Head of caudate nucleus (tissue), 42 donors: ENCODE measurements at regions of chr11 and their contacts with region 1.

Region 1: DNA sequence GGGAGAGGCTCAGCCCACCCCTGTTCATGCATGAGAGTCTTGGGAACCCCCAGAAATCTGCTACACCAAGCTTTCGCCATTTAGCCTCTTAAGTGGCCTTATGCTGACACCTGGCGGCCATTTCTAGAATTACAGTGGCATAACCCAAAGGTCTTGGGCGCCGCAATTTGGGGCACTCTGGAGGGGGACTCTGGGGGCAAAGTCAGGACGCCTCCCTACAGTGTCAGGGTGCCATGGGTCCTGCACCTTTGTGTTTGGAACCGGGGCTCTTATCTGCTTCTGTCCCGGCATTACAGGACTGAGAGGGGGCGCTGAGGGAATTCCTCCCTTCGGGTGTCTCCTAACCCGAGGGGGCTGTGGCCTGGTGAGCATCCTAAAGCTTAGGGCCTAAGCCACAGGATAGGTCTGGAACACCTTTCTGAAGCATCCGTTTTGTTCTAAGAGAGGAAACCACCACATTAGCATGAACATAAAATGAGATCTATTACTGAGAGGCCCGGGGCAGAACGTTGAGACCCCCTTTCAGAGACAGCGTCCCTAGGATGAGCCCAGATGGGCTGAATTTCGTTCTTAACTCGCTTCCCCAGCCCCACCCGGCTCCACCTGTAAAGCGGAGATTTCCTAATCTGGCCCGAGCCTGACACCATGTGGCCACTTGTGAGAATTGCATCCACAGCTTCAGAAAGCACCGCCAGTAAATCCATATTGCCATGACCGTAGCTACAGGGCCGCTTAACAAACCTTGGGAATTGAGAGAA is 9.3 kb downstream of the INS start:
- DNase-seq: peak; percentile 70 to 92 (median 84)

Region 2: DNA sequence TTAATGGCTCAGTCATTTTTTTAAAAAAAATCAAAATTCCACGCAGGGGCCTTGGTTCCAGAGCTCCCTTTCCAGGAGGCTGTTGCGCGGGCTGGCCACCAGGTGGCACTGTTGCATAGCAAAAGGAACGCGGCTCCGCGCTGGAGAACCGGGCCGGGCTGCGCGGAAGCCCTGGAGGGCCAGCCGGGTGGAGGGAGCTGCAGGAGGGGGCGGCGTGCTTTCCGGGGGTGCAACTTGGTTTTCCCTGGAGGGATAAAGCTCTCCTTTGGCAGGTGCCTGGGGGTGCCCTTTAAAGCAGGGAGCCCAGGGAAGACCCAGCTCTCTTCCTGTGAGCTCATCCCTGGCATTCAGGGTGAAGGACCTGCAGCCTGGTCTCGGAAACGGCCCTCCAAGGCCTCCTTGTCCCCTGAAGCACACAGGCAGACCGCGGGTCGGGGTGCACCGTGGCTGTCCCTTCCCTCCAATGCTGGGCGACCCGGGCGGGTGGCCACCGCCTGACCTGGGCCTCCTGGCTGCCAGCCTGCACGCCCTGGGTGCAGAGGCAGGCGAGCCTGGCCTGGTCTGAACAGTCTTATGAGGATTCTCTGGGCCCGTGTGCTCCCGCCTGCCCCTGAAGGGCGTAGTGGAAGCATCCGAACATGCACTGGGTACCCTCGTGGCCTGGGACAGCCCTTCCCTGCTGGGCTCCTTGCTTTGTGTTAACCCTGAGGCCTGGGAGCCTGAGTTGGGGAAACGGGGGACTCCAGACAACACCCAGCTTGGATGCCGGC is 498.7 kb before region 1 on chr11:
- intact Hi-C with region 1: loop called (anchors 5 kb)
- DNase-seq: peak; percentile 71 to 94 (median 87)

Region 3: DNA sequence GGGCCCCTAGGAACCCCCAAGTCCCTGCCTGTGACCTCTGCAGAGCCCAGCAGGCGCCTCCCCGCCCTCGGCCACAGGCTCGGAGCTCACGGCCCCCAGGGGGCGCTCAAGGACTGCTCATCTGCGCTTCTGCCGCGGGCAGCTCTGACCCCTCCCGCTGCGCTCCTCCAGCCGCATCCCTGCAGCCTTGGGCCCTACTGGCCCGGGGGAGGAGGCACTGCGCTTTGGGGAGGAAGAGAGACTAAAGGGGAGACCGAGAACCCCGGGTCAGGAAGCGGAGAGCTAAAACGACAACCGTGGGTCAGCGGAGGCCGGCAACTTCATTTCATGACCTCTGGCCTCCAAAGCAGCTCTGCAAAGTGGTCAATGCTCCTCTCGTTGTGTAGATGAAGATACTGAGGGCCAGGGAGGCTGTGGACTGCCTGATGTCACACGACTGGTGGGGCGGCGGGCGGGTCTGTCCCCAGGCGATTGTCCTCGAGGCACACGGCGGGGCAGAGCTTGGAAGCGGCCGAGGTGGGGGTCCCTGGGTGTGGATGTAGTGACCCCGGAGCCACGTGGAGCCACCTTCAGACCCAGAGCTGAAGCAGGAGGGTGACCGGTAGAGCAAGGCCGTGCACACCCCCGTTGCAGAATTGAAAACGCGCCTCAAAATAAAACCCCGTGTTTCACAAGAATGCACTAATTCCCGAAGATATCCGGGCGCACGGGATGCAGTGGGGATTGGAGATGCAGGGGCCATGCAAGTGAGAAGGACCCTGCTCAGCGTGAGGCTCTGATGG is 457.4 kb before region 1 on chr11:
- intact Hi-C with region 1: loop called (anchors 5 kb)
- DNase-seq: peak; percentile 73 to 97 (median 92)

Region 4: DNA sequence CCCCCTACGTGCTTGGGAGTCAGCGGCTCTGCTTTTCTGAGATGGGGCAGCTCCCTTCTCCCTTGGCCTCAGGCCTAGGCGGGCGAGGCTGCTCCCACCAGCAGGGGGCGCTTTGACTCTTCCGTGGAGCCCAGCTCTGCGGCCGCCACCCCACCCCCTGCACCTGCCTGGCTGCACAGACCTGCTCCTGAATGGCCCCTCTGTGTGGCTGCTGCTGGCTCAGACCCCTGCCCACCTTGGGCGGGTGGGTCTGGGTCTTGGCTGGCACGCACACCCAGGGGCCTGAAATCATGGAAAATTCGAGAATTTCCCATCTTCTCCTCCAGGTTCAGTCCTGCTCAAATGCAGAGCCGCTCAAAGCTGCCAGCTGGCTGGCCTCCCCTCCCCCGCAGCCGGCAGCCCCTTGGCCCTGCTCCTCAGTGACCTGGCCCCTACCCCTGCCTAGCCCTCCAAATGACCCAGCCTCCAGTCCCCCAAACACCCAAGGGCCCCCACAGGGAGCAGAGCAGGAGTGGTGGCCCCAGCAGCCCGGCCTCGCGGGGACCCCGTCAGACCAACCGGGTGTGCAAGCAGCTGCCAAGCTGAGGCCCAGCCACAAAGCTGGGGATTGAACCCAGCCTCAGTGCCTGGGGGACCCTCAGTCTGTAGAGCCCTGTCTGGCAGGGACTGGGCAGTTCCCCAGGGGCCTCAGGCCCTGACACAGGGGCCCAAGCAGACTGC is 269.0 kb before region 1 on chr11:
- intact Hi-C with region 1: loop called (anchors 10 kb)
- DNase-seq: peak; percentile 28 to 88 (median 78)

Region 5: DNA sequence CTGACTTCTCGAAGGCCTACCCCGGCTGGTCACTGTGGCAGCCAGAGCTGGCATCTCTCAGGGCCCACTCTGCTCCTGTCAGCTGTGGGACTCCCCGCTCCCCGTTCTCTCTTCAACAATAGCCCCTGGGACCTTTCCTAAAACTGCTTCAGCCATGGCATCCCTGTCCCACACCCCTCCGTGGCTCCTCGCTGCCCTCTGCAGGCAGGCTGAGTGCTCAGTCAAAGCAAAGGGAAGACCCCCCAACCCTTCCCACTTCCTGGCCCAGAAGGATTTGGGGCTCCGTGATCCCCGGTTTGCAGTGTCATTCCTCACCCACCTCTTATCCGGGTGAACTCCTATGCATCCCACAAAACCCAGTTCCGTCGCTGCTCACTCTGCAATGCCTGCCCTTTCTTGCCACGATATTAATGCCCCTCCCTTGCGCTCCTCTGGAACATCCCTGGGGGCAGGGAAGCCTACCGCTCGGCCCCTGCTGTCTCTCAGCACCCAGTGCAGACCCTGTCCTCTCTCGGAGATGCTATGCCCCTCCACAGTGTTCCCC is 21.5 kb after region 1 on chr11:
- intact Hi-C with region 1: no loop called
- DNase-seq: no peak

Region 6: DNA sequence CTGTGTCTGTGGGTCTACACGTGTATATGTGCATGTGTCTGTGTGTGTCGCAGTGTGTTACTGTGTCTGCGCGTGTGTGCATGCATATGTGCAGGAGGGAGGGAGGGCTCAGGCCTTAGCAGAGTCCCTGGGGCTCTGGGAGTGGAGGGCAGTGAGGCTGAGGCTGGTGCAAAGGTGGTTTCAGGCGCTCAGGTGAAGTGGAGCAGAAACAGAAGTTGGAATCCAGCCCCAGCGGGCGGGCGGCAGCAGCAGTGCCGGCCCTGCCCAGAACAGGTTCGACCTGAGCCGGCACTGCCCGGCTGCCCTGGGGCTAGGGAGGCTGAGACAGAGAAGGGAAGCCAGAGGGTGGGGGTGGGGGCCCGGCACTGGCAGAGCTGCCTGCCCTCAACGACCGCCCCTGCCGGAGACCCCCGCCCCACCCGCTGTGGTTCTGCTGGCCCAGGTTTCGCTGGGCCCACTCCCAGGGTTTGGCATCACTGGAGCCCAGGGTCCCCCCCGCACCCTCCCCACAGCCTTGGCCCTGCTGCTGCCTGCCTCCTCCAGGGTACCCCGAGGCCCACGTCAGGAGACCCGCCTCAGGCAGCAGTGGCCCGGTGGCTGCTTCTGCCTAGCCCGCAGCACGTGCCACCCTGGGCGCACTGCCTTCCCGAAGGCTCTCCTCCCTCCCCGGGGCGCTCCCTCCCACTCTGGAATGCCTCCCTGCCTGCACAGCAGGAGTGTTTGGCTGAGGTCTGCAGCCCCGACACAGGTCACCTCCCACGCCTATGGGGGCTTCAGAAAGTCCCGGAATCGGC is 105.4 kb after region 1 on chr11:
- intact Hi-C with region 1: no loop called
- DNase-seq: peak in 5 of 42 donors; percentile 12 to 34 (median 27)